Activated CD4-positive, alpha-beta memory T cell treated with anti-CD3 and anti-CD28 coated beads for 36 hours (primary cell): ENCODE measurements at regions of chr1 and their contacts with region 1.

Region 1: DNA sequence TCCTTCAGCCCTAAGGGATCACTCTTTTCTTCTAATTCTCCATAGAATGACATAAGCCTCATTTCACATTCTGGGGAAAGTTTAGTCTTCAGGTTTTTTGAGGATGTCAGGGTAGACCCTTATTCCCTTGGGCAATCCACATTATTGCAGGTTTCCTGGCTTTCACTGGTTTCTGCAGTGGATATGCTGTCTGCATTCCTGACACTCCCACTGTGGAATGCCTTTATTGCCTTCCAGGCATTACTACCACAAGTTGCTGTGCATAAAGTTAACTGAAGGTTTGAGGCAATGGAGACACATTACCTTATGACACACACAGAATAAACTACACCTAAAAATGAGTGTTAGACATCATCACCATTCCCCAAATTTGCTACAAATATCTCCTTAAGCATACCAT is 12.7 kb downstream of the FASLG start:
- DNase-seq: no peak
- H3K4me3 Mint-ChIP-seq: no peak overlapping the region
- H3K27ac Mint-ChIP-seq: no peak overlapping the region
- H3K4me1 Mint-ChIP-seq: peaks cover 77% of the 10 kb centered on the region
- H3K27me3 Mint-ChIP-seq: no peaks in the 10 kb centered on the region

Region 2: DNA sequence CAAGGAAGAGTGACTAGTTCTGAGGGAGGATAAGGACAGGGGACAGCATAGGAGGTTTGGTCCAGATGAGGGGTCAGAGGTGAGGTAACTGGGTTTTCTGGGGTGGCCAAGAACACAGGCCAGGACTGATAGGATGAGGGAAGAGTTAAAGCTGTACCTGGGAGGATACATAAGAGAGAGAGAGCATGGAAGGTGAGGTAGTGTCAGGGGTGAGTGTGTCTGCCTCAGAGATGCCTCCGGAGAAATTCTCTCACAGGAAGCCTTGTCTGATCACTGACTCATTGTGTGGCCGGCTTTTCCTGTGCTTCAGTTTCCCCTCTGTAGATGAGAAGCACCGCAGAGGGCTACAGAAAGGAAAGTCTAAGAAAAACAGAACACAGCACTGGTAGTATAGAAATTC is 27.5 kb after region 1 on chr1:
- CTCF ChIA-PET with region 1: interaction called, 4 read pairs
- POLR2A ChIA-PET with region 1: interaction called, 8 read pairs
- intact Hi-C with region 1: loop called (anchors 1 kb)
- DNase-seq: peak; percentile 86
- H3K4me3 Mint-ChIP-seq: peak overlapping the region; percentile 14
- H3K27ac Mint-ChIP-seq: peak overlapping the region; percentile 88
- H3K4me1 Mint-ChIP-seq: peaks cover 50% of the 10 kb centered on the region
- H3K27me3 Mint-ChIP-seq: no peaks in the 10 kb centered on the region

Region 3: DNA sequence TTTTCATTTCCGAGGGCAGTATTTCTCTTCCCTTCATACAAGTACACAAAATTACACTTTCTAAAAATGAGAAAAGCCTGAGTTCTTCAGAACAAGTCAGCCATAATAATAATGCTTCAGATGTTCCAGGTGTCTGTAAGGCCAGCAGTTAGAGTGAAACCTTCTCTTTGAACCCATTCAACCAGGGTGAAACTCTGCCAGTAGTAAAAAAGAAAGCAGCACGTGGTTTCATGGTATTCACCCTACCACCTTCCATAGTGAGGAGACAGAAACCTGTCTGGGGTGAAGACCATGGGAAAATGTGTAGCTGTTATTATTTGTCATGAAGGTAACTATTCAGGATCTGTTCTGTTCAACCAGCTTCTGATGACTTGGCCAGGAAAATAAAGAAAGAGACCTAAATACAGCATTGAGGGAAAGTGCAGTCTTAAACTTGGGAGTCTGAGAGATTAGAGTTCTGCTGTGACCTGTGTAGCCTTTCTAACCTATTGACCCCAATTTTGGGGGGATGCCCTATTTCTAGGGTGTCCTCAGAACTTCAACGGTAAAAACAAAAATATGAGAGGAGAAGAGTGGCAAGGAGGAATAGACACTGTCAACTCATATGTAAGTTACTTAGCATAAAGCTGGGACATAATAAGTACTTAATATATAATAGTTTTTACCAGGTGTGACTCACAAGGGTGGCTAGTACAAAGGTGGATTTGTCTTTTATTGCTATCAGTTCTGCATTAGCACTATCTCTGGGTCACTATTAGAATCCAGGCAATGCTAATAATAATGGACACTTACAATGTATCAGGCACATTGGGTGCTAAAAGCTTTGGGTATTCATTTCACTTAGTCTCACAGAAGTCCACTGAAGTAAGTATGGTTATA is 605.6 kb after region 1 on chr1:
- CTCF ChIA-PET with region 1: no interaction called
- POLR2A ChIA-PET with region 1: no interaction called
- intact Hi-C with region 1: no loop called
- DNase-seq: no peak
- H3K4me3 Mint-ChIP-seq: no peak overlapping the region
- H3K27ac Mint-ChIP-seq: no peak overlapping the region
- H3K4me1 Mint-ChIP-seq: peaks cover 7% of the 10 kb centered on the region
- H3K27me3 Mint-ChIP-seq: no peaks in the 10 kb centered on the region